Sciatic nerve (tissue), 2 donors: ENCODE measurements at regions of chr1 and their contacts with region 1.

Region 1: DNA sequence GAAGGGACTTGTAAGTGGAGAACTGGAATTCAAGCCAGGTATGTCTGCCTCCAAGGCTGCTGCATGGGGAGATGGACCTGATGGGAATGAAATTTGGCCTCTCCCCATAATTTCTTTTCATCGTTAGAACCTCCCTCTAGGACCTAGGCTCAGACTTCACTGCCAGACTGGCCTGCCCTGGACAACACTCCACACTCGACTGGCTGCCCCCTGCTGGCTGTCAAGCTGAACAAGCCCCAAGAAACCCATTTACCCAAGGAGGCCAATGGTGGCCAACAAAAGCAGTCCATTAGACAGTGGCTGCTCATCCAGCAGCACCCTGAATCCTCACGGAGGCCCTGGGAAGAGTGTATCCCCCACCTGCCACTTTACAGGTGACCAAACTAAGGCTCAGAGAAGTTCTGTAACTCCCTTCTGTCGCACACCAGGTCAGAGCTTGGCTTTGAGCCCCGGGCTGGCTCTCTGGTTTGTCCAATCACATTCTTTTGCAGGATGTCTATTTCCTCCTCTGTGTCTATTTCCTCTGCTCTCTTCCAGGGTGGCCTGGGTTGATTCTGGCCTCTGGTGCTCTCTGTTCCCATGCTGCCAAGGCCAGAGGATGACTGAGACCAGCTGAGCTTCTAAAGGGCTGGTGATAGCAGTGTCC is 3.8 kb downstream of the RNF186 start:
- DNase-seq: peak; percentile 66
- ATAC-seq: peak; percentile 46

Region 2: GRCh38 chr1:19762175-19762779 is 49.1 kb before region 1 on chr1:
- intact Hi-C with region 1: loop called (anchors 10 kb)
- DNase-seq: no peak
- ATAC-seq: peak; percentile 56

Region 3: DNA sequence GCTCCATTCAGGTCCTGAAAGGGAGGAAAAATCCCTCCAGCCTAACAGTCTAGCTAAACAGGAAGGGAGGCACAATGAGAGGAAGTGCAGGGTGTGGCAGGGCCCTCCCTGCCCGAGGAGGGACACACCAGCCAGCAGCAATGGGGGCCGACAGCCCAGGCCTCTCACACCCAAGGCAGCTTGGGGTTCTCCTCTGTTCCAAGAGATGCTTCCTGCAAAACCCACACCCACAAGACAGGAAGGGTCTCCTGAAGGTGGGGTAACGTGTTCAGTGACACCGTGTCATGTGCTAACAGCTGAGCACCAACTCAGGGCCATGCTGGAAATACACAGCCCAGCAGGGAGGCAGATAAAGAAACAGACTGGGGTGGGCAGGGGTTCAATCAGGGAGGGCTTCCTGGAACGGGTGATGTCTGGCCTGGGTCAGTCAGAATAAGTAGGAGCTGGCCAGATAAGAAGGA is 1468.7 kb after region 1 on chr1:
- intact Hi-C with region 1: no loop called
- DNase-seq: no peak
- ATAC-seq: peak; percentile 23